Endothelial cell of umbilical vein (primary cell): ENCODE measurements at regions of chr14 and their contacts with region 1.

Region 1: GRCh38 chr14:64303471-64303917 is 9.3 kb upstream of the ESR2 start:
- DNase-seq: peak; percentile 71
- H3K4me3 ChIP-seq: no peak overlapping the region
- H3K27ac ChIP-seq: no peak overlapping the region
- H3K4me1 ChIP-seq: no peaks in the 10 kb centered on the region
- H3K27me3 ChIP-seq: no peaks in the 10 kb centered on the region
- CTCF ChIP-seq: peak; percentile 48 to 50
- POLR2A ChIP-seq: no peak

Region 2: DNA sequence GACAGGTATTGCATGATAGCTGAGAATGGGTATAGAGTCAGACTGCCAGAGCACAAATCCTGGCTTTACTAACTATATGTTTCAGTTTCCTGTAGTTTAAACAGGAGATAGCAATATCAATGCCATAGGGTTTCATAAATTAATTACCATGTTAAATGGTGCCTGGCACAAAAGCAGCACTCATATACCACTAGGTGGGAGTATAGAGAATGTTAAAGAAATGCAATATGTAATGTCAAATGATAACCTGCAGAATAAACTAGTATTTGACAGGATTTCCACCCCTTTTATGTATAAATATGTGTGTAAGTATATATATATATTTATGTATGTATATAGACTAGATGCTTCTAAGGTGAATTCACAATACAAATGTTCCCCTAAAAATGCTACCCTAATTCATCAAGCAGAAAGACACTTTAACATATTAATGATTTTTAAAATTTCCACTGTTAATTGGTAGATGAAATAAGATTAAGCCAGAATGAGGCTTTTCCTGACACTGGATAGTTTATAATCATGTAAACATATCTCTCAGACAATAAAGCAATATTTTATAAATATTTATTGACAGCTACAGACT is 670.5 kb before region 1 on chr14:
- CTCF ChIA-PET with region 1: interaction called, 14 read pairs
- POLR2A ChIA-PET with region 1: no interaction called
- dilution Hi-C with region 1: no loop called
- intact Hi-C with region 1: no loop called
- DNase-seq: peak; percentile 52
- H3K4me3 ChIP-seq: no peak overlapping the region
- H3K27ac ChIP-seq: no peak overlapping the region
- H3K4me1 ChIP-seq: no peaks in the 10 kb centered on the region
- H3K27me3 ChIP-seq: no peaks in the 10 kb centered on the region
- CTCF ChIP-seq: peak; percentile 41 to 45
- POLR2A ChIP-seq: no peak

Region 3: DNA sequence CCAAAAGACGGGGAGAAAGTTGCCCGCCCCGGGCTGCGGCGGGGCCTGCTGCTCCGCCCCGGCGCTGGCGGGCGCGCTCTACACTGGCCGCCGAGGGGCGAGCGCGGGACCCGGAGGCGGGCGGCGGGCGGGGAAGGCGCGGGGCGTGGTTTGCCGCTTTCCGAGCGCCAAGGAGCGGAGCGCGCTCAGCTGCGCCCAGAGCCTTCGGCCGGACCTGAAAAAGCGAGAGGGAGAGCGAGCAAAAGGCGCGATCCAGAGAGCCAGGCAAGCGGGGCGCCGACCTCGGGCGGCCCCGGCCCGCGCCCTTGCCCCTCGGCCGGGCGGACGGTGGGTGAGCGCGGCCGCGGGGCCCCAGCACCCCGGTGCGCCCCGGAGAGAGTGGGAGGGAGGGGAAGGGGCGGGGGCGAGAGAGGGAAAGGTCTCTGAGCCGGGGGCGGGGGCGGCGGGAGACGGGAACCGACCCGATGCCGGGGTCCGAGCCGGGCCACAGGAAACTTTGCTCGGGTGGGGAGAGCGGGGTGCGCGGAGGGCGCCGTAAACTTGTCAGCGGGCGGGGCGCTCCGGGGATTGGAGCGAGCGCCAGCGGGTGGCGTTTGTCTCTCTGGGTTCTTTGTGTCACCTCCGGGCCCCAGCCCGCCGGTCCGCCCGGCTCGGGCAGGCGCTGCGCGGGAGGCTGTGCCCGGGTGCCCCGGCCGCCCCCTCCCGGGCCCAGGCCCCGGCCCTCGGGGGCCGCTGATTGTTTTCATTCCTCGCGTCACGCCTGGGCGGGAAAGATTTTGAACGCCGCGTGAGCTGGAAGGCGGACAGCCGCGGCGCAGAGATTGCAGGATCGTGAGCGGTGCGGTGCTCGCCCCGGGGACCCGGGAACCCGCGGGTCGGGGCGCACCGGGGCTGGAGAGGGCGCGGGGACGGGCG is 450.4 kb before region 1 on chr14 and contains the start of gene SYNE2:
- CTCF ChIA-PET with region 1: interaction called, 12 read pairs
- POLR2A ChIA-PET with region 1: interaction called, 6 read pairs
- dilution Hi-C with region 1: no loop called
- intact Hi-C with region 1: loop called (anchors 1 kb)
- DNase-seq: peak; percentile 78
- H3K4me3 ChIP-seq: peak within 1 kb of the TSS; percentile 66 to 77 (median 77)
- H3K27ac ChIP-seq: peak within 1 kb of the TSS; percentile 66
- H3K4me1 ChIP-seq: peaks cover 15% of the 10 kb centered on the region
- H3K27me3 ChIP-seq: no peaks in the 10 kb centered on the region
- CTCF ChIP-seq: peak in 1 of 2 donors; percentile 17
- POLR2A ChIP-seq: peak; percentile 14
- total RNA-seq, gene SYNE2: 42.7 and 53.7 TPM in 2 replicates

Region 4: DNA sequence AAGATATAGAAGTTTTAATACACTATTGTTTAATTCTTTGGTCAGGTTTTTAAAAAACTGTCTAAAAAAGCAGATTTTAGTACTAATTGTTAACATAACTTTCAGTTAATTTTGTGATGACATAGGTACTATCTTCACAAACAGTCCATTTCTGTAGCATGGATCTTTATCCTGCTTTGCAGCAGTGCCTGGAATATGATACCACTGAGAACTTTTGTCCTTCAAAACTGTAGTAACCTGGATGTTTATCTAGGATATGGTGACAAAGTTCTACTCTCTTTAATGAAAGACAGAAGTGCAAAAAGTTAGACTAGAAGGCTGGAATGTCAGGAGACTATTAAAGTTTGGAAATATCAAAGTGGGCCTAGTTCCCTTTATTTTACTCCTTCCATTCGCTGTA is 290.8 kb before region 1 on chr14:
- CTCF ChIA-PET with region 1: interaction called, 155 read pairs
- POLR2A ChIA-PET with region 1: no interaction called
- dilution Hi-C with region 1: no loop called
- intact Hi-C with region 1: loop called (anchors 1 kb)
- DNase-seq: no peak
- H3K4me3 ChIP-seq: no peak overlapping the region
- H3K27ac ChIP-seq: no peak overlapping the region
- H3K4me1 ChIP-seq: no peaks in the 10 kb centered on the region
- H3K27me3 ChIP-seq: no peaks in the 10 kb centered on the region
- CTCF ChIP-seq: no peak
- POLR2A ChIP-seq: no peak

Region 5: GRCh38 chr14:64060648-64061096 is 242.8 kb before region 1 on chr14:
- CTCF ChIA-PET with region 1: interaction called, 36 read pairs
- POLR2A ChIA-PET with region 1: no interaction called
- dilution Hi-C with region 1: no loop called
- intact Hi-C with region 1: no loop called
- DNase-seq: peak; percentile 10
- H3K4me3 ChIP-seq: no peak overlapping the region
- H3K27ac ChIP-seq: no peak overlapping the region
- H3K4me1 ChIP-seq: no peaks in the 10 kb centered on the region
- H3K27me3 ChIP-seq: no peaks in the 10 kb centered on the region
- CTCF ChIP-seq: peak; percentile 53 to 56
- POLR2A ChIP-seq: no peak

Region 6: DNA sequence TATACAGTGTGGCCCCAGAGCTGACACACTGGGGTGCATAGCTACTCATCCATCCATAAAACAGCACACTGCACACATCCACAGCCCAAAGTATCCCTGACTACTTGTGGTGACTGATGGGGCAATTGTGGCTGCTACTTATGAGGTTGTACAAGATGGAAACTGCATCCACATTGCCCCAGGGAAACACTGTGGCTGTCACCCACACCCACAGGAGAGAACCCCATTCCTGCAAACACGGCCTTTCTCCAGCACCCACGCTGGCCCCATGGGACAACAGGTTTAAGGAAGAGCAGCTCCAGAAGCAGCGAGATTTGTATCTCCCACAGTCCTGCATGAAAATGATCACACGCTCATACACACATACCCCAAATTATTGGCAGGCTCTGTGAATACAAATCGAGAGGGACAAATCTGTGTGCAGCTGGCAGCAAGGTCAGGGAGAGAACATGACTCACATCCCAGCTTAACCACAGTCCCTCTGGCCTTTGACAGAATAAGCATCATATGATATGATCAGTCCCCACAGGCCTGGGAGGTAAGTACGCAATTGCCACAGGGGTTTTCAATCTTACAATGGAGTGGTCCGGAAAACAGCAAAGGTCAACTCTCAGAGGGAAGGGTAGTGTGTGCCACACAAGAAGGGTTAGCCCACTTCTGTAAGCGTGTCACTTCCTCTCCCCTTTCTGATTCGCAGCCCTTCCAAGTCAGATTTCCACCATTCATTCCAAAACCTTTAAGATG is 71.2 kb before region 1 on chr14:
- CTCF ChIA-PET with region 1: interaction called, 10 read pairs
- POLR2A ChIA-PET with region 1: interaction called, 3 read pairs
- dilution Hi-C with region 1: no loop called
- intact Hi-C with region 1: no loop called
- DNase-seq: peak; percentile 95
- H3K4me3 ChIP-seq: no peak overlapping the region
- H3K27ac ChIP-seq: peak overlapping the region; percentile 88
- H3K4me1 ChIP-seq: peaks cover 24% of the 10 kb centered on the region
- H3K27me3 ChIP-seq: no peaks in the 10 kb centered on the region
- CTCF ChIP-seq: no peak
- POLR2A ChIP-seq: peak; percentile 49

Region 7: GRCh38 chr14:64338616-64339316 is 35.3 kb after region 1 on chr14:
- CTCF ChIA-PET with region 1: interaction called, 15 read pairs
- POLR2A ChIA-PET with region 1: no interaction called
- dilution Hi-C with region 1: no loop called
- intact Hi-C with region 1: no loop called
- DNase-seq: peak; percentile 99
- H3K4me3 ChIP-seq: peak overlapping the region; percentile 50 to 56 (median 51)
- H3K27ac ChIP-seq: peak overlapping the region; percentile 14
- H3K4me1 ChIP-seq: peaks cover 10% of the 10 kb centered on the region
- H3K27me3 ChIP-seq: no peaks in the 10 kb centered on the region
- CTCF ChIP-seq: no peak
- POLR2A ChIP-seq: peak; percentile 79